Lower leg skin (tissue), 4 donors: ENCODE measurements at regions of chr12 and their contacts with region 1.

Region 1: DNA sequence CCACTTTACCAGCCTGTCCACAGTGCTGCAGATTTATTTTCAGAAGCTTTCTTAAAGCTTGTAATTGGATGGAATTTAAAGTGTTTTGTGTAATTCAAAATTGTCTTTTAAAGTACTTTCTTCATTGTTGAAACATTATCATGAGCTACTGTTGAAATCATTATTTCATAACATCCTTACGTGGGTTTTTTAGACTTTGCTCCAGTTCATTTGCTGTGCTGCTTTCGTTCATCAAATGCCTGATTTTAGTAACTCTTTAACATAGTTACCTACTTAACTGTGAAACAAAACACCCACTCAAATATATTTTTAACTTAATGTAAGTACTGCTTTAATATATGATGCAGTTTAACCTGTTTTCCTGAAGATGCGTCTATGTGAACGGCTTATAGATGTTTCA is 47.5 kb downstream of the PIWIL1 start:
- DNase-seq: no peak
- H3K4me3 ChIP-seq: no peak overlapping the region
- CTCF ChIP-seq: no peak
- POLR2A ChIP-seq: no peak

Region 2: DNA sequence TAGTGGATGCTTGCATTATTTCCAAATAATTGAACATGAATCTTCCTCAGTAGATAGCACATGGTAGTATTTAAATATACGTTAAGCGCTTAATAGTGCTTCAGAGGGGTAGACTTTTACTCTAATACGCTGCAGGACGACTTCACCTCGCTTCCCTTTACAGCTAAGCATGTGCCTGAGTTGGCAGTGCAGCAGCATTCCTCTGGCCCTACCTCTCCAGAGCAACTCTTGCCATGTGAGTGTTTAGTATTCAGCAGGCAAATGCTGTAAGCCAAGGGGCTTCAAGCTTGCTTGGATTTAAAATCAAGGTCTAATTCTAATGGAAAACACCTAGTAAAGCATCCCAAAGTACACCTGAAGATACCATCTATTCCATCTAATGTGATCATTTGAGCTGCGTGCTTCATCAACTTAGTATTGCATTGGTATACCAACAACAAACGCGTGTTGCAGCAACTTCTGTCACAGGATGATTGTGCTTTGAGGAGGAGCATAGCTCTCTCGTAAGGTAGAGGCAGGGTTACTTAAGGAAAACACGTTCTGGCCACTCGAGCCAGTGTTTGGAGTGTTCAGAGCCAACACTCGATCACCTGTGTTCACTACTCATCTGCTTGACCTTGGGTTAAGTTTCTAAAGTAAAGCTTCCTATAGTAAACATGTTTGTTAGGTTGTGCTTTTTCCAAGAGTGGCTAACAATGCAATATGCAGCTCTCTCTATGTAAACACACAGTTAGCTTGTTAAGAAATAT is 13.1 kb after region 1 on chr12:
- intact Hi-C with region 1: loop called (anchors 1 kb)
- DNase-seq: no peak
- H3K4me3 ChIP-seq: no peak overlapping the region
- CTCF ChIP-seq: no peak
- POLR2A ChIP-seq: no peak

Region 3: GRCh38 chr12:130803702-130804101 is 418.5 kb after region 1 on chr12:
- intact Hi-C with region 1: no loop called
- DNase-seq: no peak
- H3K4me3 ChIP-seq: no peak overlapping the region
- CTCF ChIP-seq: no peak
- POLR2A ChIP-seq: no peak